GM10248 (cell line): ENCODE measurements at regions of chr1 and their contacts with region 1.

Region 1: GRCh38 chr1:203133970-203134725 is 6.6 kb downstream of the ADORA1 start:
- DNase-seq: no peak
- CTCF ChIP-seq: no peak

Region 2: DNA sequence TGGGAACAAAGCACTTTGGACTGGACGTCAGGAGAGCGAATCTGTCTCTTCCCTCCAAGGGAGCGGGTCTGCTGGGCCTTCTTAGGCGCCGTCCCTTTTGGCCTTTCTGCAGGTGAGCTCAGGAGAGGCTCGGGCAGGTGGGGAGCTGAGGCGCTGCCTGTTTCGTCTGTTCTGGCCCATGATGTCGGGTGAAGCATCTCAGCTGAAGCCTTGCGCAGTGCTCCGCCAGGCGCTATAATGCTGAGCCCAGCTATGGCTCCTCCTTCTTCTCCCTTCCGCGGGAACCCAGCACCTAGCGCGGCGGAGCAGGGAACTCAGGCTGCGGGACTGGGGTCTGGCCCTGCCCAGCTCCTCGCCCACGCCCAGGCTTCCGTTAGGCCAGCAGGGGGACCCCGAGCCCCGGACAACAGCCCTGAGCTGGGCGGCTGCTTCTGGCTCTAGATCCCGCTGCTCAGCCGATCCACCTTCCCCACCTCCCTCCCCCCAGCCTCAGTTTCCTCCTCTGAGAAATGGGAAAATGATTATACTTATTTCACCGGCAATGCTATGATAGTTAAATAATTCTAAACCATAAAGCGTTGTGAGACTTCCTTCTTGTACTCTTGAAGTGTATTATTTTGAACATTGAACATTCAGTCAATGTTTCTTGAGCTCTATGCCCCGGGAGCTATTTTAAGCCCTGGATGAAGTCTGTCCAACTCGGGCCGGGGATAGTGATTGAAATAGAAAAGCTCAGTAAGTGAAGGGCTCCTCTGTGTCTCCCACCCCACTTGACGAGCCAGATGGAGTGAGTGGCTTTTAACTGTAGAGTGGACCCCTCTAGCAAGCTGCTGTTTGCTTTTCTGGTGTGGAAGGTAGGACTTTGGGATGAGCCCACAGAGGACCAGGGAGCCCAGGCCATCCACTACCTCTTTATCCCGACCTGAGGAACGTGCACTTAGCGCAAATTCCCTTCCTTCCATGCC is 16.3 kb before region 1 on chr1:
- CTCF ChIA-PET with region 1: interaction called, 10 read pairs
- POLR2A ChIA-PET with region 1: no interaction called
- DNase-seq: peak; percentile 83
- CTCF ChIP-seq: peak; percentile 61

Region 3: DNA sequence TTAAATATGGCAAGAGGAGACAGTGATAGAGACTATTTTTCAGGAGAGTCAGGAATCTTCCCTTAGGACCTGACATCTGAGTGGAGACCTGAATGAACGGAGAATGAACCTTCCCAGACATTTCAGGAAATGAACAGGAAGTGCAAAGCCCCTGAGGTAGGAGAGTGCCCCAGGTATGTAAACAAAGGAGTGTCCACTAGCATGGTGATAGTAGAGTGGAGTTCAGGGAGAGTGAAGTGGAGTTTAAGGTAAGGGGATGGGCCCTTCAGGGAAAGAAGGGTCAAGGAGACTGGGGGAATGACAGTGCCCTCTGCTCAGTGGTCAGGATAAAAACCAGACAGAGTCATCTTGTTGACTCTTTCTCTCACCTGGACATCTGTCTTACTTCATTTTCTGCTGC is 22.1 kb after region 1 on chr1:
- CTCF ChIA-PET with region 1: no interaction called
- POLR2A ChIA-PET with region 1: no interaction called
- DNase-seq: no peak
- CTCF ChIP-seq: no peak

Region 4: DNA sequence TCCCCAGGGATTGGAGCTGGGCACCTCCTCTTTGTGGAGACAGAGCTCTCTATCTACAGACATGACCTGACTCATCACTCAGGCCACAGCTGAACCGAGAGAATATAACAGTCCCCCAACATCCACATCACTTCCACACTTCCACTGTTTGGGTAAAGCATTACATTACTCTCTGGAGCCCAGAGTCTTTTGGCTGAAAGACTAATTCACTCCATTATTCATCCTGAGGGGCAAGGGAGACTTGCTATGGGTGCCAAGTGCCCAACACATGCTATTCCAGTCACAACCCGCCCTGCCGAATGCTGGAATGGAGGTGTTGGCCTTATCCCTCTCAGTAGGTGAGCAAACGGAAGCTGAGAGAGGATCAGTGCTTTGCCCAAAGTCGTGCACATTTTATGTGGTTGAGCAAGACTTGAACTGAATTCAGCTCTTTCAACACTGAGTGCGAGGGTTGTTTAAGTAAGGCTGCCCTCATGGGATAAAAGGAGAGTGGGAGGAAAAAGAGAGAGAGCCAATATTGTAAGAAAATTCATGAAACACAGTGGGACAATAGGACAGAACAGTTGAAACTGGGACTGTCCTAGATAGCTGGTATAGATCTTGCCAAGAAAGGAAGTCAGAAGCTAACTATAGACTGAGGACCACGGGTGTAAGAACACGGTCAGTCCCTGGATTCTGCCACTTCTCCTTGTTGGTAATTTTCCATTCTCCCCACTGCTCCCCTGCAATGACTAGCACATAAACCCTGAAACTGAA is 65.8 kb after region 1 on chr1:
- CTCF ChIA-PET with region 1: no interaction called
- POLR2A ChIA-PET with region 1: no interaction called
- DNase-seq: no peak
- CTCF ChIP-seq: no peak

Region 5: GRCh38 chr1:203239526-203240305 is 105.6 kb after region 1 on chr1:
- CTCF ChIA-PET with region 1: no interaction called
- POLR2A ChIA-PET with region 1: no interaction called
- DNase-seq: peak; percentile 12
- CTCF ChIP-seq: no peak

Region 6: DNA sequence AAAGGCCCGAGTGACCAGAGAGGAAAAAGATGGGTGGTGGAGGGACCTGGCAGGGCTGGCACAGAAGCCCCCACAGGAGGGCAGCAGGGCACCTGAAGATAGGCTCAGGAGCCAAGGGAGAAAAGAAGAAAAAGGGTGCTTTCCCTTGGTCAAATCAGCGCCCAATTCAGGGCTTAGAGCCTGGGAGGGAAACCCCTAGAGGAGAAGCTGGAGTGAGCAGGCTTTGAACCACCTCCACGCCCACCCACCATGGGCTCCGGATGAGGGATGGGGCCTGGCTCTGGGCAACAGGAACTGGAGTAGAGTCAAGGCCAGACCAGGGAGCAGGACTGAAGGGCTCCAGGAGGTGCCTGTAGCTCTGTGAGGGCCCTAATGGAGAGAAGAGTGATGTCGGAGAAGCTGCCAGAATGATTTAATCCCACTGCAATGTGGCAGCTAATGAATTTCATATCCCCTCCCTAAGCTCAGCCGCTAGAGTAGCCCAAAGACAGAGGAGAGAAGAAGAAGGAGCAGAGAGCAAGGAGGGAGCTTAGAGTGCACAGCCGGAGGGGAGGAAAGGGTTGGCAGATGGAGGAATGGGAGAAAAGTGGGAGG is 329.4 kb after region 1 on chr1:
- CTCF ChIA-PET with region 1: no interaction called
- POLR2A ChIA-PET with region 1: no interaction called
- DNase-seq: no peak
- CTCF ChIP-seq: no peak